B cell (primary cell): ENCODE measurements at regions of chr11 and their contacts with region 1.

Region 1: GRCh38 chr11:60265373-60266214 is 14.9 kb upstream of the MS4A4A start:
- DNase-seq: peak; percentile 76
- ATAC-seq: peak; percentile 43
- H3K4me3 ChIP-seq: no peak overlapping the region
- H3K4me3 Mint-ChIP-seq: no peak overlapping the region
- H3K27ac ChIP-seq: no peak overlapping the region
- H3K27ac Mint-ChIP-seq: no peak overlapping the region
- H3K4me1 ChIP-seq: no peaks in the 10 kb centered on the region
- H3K4me1 Mint-ChIP-seq: peaks cover 4% of the 10 kb centered on the region
- H3K27me3 ChIP-seq: no peaks in the 10 kb centered on the region
- H3K27me3 Mint-ChIP-seq: no peaks in the 10 kb centered on the region
- CTCF ChIP-seq: peak; percentile 98

Region 2: GRCh38 chr11:60145677-60146076 is 119.9 kb before region 1 on chr11:
- CTCF ChIA-PET with region 1: no interaction called
- POLR2A ChIA-PET with region 1: no interaction called
- intact Hi-C with region 1: no loop called
- DNase-seq: no peak
- ATAC-seq: no peak
- H3K4me3 ChIP-seq: no peak overlapping the region
- H3K4me3 Mint-ChIP-seq: no peak overlapping the region
- H3K27ac ChIP-seq: no peak overlapping the region
- H3K27ac Mint-ChIP-seq: no peak overlapping the region
- H3K4me1 ChIP-seq: no peaks in the 10 kb centered on the region
- H3K4me1 Mint-ChIP-seq: no peaks in the 10 kb centered on the region
- H3K27me3 ChIP-seq: no peaks in the 10 kb centered on the region
- H3K27me3 Mint-ChIP-seq: no peaks in the 10 kb centered on the region
- CTCF ChIP-seq: no peak

Region 3: GRCh38 chr11:60235321-60235720 is 30.3 kb before region 1 on chr11:
- CTCF ChIA-PET with region 1: no interaction called
- POLR2A ChIA-PET with region 1: no interaction called
- intact Hi-C with region 1: no loop called
- DNase-seq: no peak
- ATAC-seq: no peak
- H3K4me3 ChIP-seq: no peak overlapping the region
- H3K4me3 Mint-ChIP-seq: no peak overlapping the region
- H3K27ac ChIP-seq: no peak overlapping the region
- H3K27ac Mint-ChIP-seq: no peak overlapping the region
- H3K4me1 ChIP-seq: no peaks in the 10 kb centered on the region
- H3K4me1 Mint-ChIP-seq: no peaks in the 10 kb centered on the region
- H3K27me3 ChIP-seq: no peaks in the 10 kb centered on the region
- H3K27me3 Mint-ChIP-seq: peaks cover 5% of the 10 kb centered on the region
- CTCF ChIP-seq: no peak

Region 4: GRCh38 chr11:60485986-60486385 is 220.4 kb after region 1 on chr11:
- CTCF ChIA-PET with region 1: interaction called, 24 read pairs
- POLR2A ChIA-PET with region 1: no interaction called
- intact Hi-C with region 1: loop called (anchors 1 kb)
- DNase-seq: peak; percentile 88
- ATAC-seq: peak; percentile 93
- H3K4me3 ChIP-seq: no peak overlapping the region
- H3K4me3 Mint-ChIP-seq: no peak overlapping the region
- H3K27ac ChIP-seq: no peak overlapping the region
- H3K27ac Mint-ChIP-seq: peak overlapping the region; percentile 4
- H3K4me1 ChIP-seq: peaks cover 39 to 47% of the 10 kb centered on the region in 2 donors
- H3K4me1 Mint-ChIP-seq: peaks cover 54% of the 10 kb centered on the region
- H3K27me3 ChIP-seq: no peaks in the 10 kb centered on the region
- H3K27me3 Mint-ChIP-seq: no peaks in the 10 kb centered on the region
- CTCF ChIP-seq: peak; percentile 96

Region 5: GRCh38 chr11:60625262-60625661 is 359.7 kb after region 1 on chr11:
- CTCF ChIA-PET with region 1: interaction called, 51 read pairs
- POLR2A ChIA-PET with region 1: no interaction called
- intact Hi-C with region 1: no loop called
- DNase-seq: no peak
- ATAC-seq: no peak
- H3K4me3 ChIP-seq: no peak overlapping the region
- H3K4me3 Mint-ChIP-seq: no peak overlapping the region
- H3K27ac ChIP-seq: no peak overlapping the region
- H3K27ac Mint-ChIP-seq: no peak overlapping the region
- H3K4me1 ChIP-seq: no peaks in the 10 kb centered on the region
- H3K4me1 Mint-ChIP-seq: peaks cover 7% of the 10 kb centered on the region
- H3K27me3 ChIP-seq: no peaks in the 10 kb centered on the region
- H3K27me3 Mint-ChIP-seq: no peaks in the 10 kb centered on the region
- CTCF ChIP-seq: no peak

Region 6: GRCh38 chr11:60762851-60763691 is 497.5 kb after region 1 on chr11:
- CTCF ChIA-PET with region 1: interaction called, 13 read pairs
- POLR2A ChIA-PET with region 1: no interaction called
- intact Hi-C with region 1: loop called (anchors 5 kb)
- DNase-seq: peak; percentile 80
- ATAC-seq: peak; percentile 89
- H3K4me3 ChIP-seq: peak overlapping the region in 1 of 5 experiments; percentile 10
- H3K4me3 Mint-ChIP-seq: peak overlapping the region; percentile 57
- H3K27ac ChIP-seq: no peak overlapping the region
- H3K27ac Mint-ChIP-seq: peak overlapping the region; percentile 75
- H3K4me1 ChIP-seq: peaks cover 25 to 30% of the 10 kb centered on the region in 2 donors
- H3K4me1 Mint-ChIP-seq: peaks cover 50% of the 10 kb centered on the region
- H3K27me3 ChIP-seq: peaks cover 0 to 18% (median 1%) of the 10 kb centered on the region in 4 experiments
- H3K27me3 Mint-ChIP-seq: peaks cover 26% of the 10 kb centered on the region
- CTCF ChIP-seq: peak; percentile 66